BJ (cell line): ENCODE measurements at regions of chr4 and their contacts with region 1.

Region 1: GRCh38 chr4:1899149-1900086 is 28.2 kb downstream of the NSD2 start:
- DNase-seq: no peak
- H3K4me3 ChIP-seq: no peak overlapping the region
- H3K27me3 ChIP-seq: no peaks in the 10 kb centered on the region
- CTCF ChIP-seq: peak; percentile 83

Region 2: GRCh38 chr4:1763550-1764080 is 135.8 kb before region 1 on chr4:
- CTCF ChIA-PET with region 1: interaction called, 10 read pairs
- POLR2A ChIA-PET with region 1: no interaction called
- DNase-seq: no peak
- H3K4me3 ChIP-seq: peak overlapping the region; percentile 9; the same call in 1 of the 2 replicates
- H3K27me3 ChIP-seq: no peaks in the 10 kb centered on the region; the same call in 1 of the 2 replicates
- CTCF ChIP-seq: no peak

Region 3: GRCh38 chr4:1833307-1834046 is 65.9 kb before region 1 on chr4:
- CTCF ChIA-PET with region 1: interaction called, 17 read pairs
- POLR2A ChIA-PET with region 1: no interaction called
- DNase-seq: no peak
- H3K4me3 ChIP-seq: no peak overlapping the region
- H3K27me3 ChIP-seq: no peaks in the 10 kb centered on the region
- CTCF ChIP-seq: no peak

Region 4: GRCh38 chr4:1856042-1856788 is 43.2 kb before region 1 on chr4 and contains the start of gene LETM1:
- CTCF ChIA-PET with region 1: interaction called, 30 read pairs
- POLR2A ChIA-PET with region 1: no interaction called
- DNase-seq: peak; percentile 75
- H3K4me3 ChIP-seq: peak within 1 kb of the TSS; percentile 92
- H3K27me3 ChIP-seq: no peaks in the 10 kb centered on the region
- CTCF ChIP-seq: no peak
- polyA plus RNA-seq, gene LETM1: 13.6 and 17.1 TPM in 2 replicates

Region 5: DNA sequence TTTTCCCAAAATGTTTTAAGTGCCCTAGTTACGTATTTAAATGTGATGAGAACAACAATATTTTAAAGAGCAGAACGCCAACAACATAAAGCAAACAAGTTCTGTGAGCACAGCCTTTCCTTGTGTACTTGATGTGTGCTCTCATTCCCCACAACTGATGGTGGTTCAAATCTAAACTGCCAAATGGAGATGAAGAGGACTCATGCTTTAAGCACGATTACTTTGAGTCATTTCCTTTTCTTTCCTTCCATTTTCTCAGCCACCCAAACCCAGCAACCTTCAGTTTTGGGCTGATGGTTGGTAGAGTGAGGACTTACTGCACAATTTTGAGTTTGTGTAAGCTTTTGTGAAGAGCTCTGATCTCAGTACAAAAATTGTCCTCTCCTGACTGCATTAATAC is 26.5 kb before region 1 on chr4:
- CTCF ChIA-PET with region 1: interaction called, 10 read pairs
- POLR2A ChIA-PET with region 1: no interaction called
- DNase-seq: no peak
- H3K4me3 ChIP-seq: no peak overlapping the region; the same call in 1 of the 2 replicates
- H3K27me3 ChIP-seq: no peaks in the 10 kb centered on the region
- CTCF ChIP-seq: no peak

Region 6: GRCh38 chr4:1910643-1911042 is 11.2 kb after region 1 on chr4:
- CTCF ChIA-PET with region 1: interaction called, 68 read pairs
- POLR2A ChIA-PET with region 1: no interaction called
- DNase-seq: no peak
- H3K4me3 ChIP-seq: no peak overlapping the region
- H3K27me3 ChIP-seq: no peaks in the 10 kb centered on the region
- CTCF ChIP-seq: peak; percentile 78

Region 7: DNA sequence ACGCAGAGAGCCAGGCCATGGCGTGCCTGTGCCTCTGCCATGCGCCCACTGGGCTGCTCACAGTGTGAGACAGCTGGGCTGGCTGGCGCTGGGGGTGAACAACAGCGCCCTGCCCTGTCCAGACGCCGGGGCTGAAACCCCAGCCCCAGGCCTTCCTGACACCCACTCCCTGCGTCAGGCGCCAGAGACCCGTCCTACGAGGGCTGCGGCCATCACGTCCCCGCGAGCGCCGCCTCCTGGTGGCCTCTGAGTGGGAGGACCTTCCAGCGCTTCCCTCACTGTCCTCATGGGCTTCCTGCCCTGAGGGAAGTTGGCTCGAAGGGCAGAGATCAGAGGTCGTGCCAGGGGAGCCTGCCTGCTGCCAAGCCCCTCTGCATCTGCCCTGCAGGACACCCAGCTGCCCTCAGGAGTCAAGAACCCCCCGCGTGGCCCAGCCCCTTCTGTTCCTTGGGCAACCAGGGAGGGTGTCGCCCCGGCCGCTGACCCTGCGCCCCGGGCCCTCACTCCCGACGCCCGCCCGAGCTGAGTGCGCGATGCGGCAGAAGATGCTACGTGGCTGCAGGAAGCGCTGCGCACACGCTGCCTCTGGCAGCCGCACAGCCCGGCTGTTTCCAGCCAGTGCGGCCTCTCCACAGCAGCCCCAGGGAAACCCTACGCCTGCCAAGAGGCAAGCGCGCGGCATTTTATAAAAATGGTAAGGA is 93.2 kb after region 1 on chr4:
- CTCF ChIA-PET with region 1: no interaction called
- POLR2A ChIA-PET with region 1: no interaction called
- DNase-seq: no peak
- H3K4me3 ChIP-seq: no peak overlapping the region
- H3K27me3 ChIP-seq: no peaks in the 10 kb centered on the region
- CTCF ChIP-seq: no peak

Region 8: DNA sequence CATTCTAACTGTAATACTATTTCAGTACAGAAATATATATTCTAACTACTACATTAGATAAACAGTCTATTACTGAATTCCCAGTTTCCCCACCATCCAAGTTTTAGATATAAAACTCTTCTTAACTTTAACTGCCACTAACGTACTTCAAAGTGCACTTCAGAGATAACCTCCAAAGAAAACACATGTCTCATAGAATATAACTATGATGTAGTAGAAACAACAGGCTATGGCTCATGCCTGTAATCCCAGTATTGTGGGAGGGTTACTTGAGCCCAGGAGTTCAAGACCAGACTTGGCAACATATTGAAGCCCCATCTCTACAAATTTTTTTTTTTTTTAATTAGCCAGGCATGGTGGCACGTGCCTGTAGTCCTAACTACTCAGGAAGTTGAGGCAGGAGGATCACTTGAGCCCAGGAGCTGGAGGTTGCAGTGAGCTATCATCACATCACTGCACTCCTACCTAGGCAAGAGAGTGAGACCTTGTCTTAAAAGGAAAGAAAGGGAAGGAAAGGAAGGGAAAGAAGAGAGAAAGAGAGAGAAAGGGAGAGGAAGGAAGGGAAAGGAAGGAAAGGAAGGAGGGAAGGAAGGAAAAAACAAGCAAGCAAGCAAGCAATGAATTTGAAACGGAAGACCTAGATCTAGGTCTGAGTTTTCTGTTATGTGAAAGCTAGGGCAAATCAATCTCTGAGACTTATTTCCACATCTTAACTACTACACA is 337.7 kb after region 1 on chr4:
- CTCF ChIA-PET with region 1: no interaction called
- POLR2A ChIA-PET with region 1: no interaction called
- DNase-seq: no peak
- H3K4me3 ChIP-seq: no peak overlapping the region
- H3K27me3 ChIP-seq: no peaks in the 10 kb centered on the region
- CTCF ChIP-seq: no peak